Activated CD4-positive, alpha-beta T cell treated with anti-CD3 and anti-CD28 coated beads for 36 hours (primary cell): ENCODE measurements at regions of chr12 and their contacts with region 1.

Region 1: DNA sequence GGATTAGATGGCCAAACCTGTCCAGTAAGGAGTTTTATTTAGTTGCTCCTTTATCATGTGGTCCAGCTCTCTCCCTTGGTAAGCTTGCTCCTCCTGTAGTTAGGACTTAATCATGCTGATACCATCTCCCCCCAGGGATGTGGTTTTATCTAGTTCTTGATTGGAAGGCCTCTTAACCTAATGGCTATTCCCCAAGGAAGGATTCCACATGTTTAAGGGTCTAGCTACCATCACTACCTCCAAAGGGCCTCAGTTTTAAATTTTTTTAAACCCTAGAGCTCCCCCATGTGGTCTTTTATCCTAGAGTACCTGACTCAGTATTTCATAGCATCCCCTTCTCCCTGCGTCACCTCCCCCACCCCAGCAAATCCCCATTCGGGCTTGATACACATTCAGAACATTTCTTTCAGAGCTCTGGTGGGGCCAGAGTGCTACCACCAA is 22.5 kb downstream of the MAP3K12 start:
- DNase-seq: no peak
- ATAC-seq: peak; percentile 43
- H3K4me3 Mint-ChIP-seq: no peak overlapping the region
- H3K27ac Mint-ChIP-seq: peak overlapping the region; percentile 55
- H3K4me1 Mint-ChIP-seq: peaks cover 45% of the 10 kb centered on the region
- H3K27me3 Mint-ChIP-seq: no peaks in the 10 kb centered on the region

Region 2: GRCh38 chr12:53352331-53353256 is 124.2 kb before region 1 on chr12:
- CTCF ChIA-PET with region 1: interaction called, 14 read pairs
- POLR2A ChIA-PET with region 1: no interaction called
- intact Hi-C with region 1: loop called in 1 of 2 experiments (anchors 1 kb)
- DNase-seq: peak; percentile 91
- ATAC-seq: peak; percentile 100
- H3K4me3 Mint-ChIP-seq: no peak overlapping the region
- H3K27ac Mint-ChIP-seq: peak overlapping the region; percentile 56
- H3K4me1 Mint-ChIP-seq: peaks cover 8% of the 10 kb centered on the region
- H3K27me3 Mint-ChIP-seq: no peaks in the 10 kb centered on the region

Region 3: GRCh38 chr12:53456654-53457366 is 20.0 kb before region 1 on chr12:
- CTCF ChIA-PET with region 1: interaction called, 32 read pairs
- POLR2A ChIA-PET with region 1: interaction called, 18 read pairs
- intact Hi-C with region 1: loop called (anchors 2 kb)
- DNase-seq: no peak
- ATAC-seq: no peak
- H3K4me3 Mint-ChIP-seq: no peak overlapping the region
- H3K27ac Mint-ChIP-seq: no peak overlapping the region
- H3K4me1 Mint-ChIP-seq: peaks cover 42% of the 10 kb centered on the region
- H3K27me3 Mint-ChIP-seq: no peaks in the 10 kb centered on the region

Region 4: GRCh38 chr12:53492830-53493611 is 16.2 kb after region 1 on chr12:
- CTCF ChIA-PET with region 1: interaction called, 11 read pairs
- POLR2A ChIA-PET with region 1: interaction called, 11 read pairs
- intact Hi-C with region 1: no loop called
- DNase-seq: peak; percentile 93
- ATAC-seq: peak; percentile 94
- H3K4me3 Mint-ChIP-seq: peak overlapping the region; percentile 80
- H3K27ac Mint-ChIP-seq: peak overlapping the region; percentile 88
- H3K4me1 Mint-ChIP-seq: peaks cover 20% of the 10 kb centered on the region
- H3K27me3 Mint-ChIP-seq: no peaks in the 10 kb centered on the region

Region 5: GRCh38 chr12:53508534-53509199 is 31.9 kb after region 1 on chr12:
- CTCF ChIA-PET with region 1: interaction called, 22 read pairs
- POLR2A ChIA-PET with region 1: interaction called, 6 read pairs
- intact Hi-C with region 1: no loop called
- DNase-seq: peak; percentile 92
- ATAC-seq: peak; percentile 99
- H3K4me3 Mint-ChIP-seq: no peak overlapping the region
- H3K27ac Mint-ChIP-seq: peak overlapping the region; percentile 47
- H3K4me1 Mint-ChIP-seq: peaks cover 7% of the 10 kb centered on the region
- H3K27me3 Mint-ChIP-seq: no peaks in the 10 kb centered on the region